Heart right ventricle (tissue), 16 donors: ENCODE measurements at regions of chr7 and their contacts with region 1.

Region 1: DNA sequence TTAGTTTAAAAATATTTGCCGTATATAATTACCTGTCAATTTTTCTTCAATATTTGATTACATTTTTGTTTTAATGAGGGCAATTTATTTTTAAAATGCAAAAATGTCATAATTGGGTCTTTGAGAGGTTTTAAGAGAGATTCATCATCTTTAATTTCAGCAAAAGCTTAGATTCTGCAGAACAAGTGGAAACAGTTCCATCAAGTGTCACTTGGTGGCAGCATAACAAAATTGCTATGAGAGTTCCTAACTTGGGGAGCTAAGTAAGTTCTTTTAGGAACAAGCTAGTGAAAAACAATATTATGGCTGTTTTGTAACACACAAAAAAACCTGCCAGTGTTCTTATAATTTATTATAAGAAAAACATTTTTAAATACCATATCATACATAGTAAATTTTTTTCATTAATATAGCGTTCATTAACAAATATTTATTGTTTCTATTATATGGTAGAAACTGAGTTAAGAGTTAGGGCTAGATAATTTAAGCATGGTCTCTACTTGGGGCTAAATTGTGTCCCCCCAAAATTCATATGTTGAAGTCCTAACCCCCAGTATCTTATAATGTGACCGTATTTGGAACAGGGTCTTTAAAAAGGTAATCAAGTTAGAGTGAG is 155.2 kb downstream of the MAGI2 start:
- DNase-seq: peak in 1 of 2 donors; percentile 11
- ATAC-seq: no peak
- H3K4me3 ChIP-seq: no peak overlapping the region
- H3K27ac ChIP-seq: no peak overlapping the region
- H3K4me1 ChIP-seq: no peaks in the 10 kb centered on the region
- H3K27me3 ChIP-seq: no peaks in the 10 kb centered on the region
- CTCF ChIP-seq: peak; percentile 30 to 85 (median 72)

Region 2: GRCh38 chr7:79636849-79637248 is 338.6 kb after region 1 on chr7:
- intact Hi-C with region 1: loop called in 1 of 10 experiments (anchors 10 kb)
- DNase-seq: no peak
- ATAC-seq: no peak
- H3K4me3 ChIP-seq: no peak overlapping the region
- H3K27ac ChIP-seq: no peak overlapping the region
- H3K4me1 ChIP-seq: no peaks in the 10 kb centered on the region
- H3K27me3 ChIP-seq: no peaks in the 10 kb centered on the region
- CTCF ChIP-seq: no peak

Region 3: DNA sequence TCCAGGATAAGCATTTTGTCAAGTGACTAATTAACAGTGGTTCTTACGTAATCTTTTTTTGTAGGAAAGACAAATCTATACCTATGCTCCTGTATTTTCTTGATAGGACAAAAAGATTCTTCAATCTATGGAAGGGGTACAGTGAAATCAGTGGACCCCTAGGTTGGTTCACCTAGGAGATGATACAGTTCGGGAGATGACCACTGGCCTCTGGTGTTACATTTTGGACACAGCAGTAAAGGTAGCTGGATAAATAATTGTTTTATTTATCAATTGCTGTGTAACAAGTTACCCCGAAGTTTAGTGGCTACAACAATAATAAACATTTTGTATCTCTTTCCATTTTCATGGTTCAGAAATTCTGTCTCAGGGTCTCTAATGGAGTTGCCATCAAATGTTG is 443.4 kb after region 1 on chr7:
- intact Hi-C with region 1: loop called in 2 of 10 experiments (anchors 10 kb)
- DNase-seq: no peak
- ATAC-seq: no peak
- H3K4me3 ChIP-seq: no peak overlapping the region
- H3K27ac ChIP-seq: no peak overlapping the region
- H3K4me1 ChIP-seq: no peaks in the 10 kb centered on the region
- H3K27me3 ChIP-seq: no peaks in the 10 kb centered on the region
- CTCF ChIP-seq: peak in 6 of 9 donors; percentile 28 to 45 (median 33)